Activated CD8-positive, alpha-beta T cell treated with anti-CD3 and anti-CD28 coated beads for 36 hours (primary cell): ENCODE measurements at regions of chr16 and their contacts with region 1.

Region 1: GRCh38 chr16:29848420-29849297 is 14.4 kb downstream of the CDIPT start:
- DNase-seq: peak; percentile 86
- ATAC-seq: peak; percentile 96
- H3K4me3 Mint-ChIP-seq: no peak overlapping the region
- H3K27ac Mint-ChIP-seq: no peak overlapping the region
- H3K4me1 Mint-ChIP-seq: no peaks in the 10 kb centered on the region
- H3K27me3 Mint-ChIP-seq: no peaks in the 10 kb centered on the region
- CTCF ChIP-seq: peak; percentile 93

Region 2: DNA sequence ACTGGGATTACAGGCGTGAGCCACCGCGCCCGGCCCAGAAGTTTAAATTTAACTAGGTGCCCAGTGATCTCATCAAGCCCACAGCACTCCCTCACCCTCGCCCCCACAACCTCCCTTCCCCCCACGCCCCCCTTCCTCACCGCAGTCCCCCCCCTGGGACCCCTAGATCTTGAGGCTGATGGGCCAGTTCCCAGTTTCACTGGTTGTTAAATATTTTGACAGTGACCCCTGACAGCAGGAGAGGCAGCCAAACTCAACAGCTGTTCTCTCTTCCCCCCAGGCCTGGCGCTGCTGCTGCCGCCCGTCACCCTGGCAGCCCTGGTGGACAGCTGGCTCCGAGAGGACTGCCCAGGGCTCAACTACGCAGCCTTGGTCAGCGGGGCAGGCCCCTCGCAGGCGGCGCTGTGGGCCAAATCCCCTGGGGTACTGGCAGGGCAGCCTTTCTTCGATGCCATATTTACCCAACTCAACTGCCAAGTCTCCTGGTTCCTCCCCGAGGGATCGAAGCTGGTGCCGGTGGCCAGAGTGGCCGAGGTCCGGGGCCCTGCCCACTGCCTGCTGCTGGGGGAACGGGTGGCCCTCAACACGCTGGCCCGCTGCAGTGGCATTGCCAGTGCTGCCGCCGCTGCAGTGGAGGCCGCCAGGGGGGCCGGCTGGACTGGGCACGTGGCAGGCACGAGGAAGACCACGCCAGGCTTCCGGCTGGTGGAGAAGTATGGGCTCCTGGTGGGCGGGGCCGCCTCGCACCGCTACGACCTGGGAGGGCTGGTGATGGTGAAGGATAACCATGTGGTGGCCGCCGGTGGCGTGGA is 154.1 kb before region 1 on chr16:
- CTCF ChIA-PET with region 1: interaction called, 51 read pairs
- POLR2A ChIA-PET with region 1: interaction called, 3 read pairs
- intact Hi-C with region 1: no loop called
- DNase-seq: no peak
- ATAC-seq: no peak
- H3K4me3 Mint-ChIP-seq: no peak overlapping the region
- H3K27ac Mint-ChIP-seq: no peak overlapping the region
- H3K4me1 Mint-ChIP-seq: peaks cover 2% of the 10 kb centered on the region
- H3K27me3 Mint-ChIP-seq: no peaks in the 10 kb centered on the region
- CTCF ChIP-seq: no peak

Region 3: DNA sequence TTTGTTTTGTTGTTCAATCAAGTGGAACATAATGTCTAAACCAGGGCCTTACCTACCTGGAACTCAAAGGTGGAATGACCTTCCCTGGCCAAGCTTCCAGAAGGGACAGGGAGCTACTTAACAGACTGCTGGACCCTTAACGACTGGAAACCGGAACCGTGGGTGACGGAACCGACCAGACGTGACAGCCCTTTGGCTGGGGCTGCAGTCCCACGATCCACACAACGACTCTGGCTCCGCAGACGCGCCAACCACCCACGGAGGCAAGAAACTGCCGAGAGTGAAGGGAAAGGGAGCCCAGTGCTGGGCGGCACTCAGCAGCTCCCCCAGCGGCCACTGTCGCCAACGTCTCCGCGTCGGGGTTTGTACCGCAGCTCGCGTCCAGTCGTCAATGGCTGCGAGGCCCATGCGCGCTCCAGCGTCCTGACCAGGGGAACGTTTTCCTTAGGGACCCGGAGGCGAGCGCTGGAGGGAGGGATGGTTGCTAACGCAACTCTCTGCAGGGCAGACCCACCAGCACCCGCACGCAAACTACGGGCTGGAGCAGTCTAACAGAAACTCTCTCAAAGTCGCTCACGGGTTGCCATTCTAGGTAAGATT is 63.7 kb before region 1 on chr16:
- CTCF ChIA-PET with region 1: interaction called, 12 read pairs
- POLR2A ChIA-PET with region 1: interaction called, 3 read pairs
- intact Hi-C with region 1: no loop called
- DNase-seq: peak; percentile 84
- ATAC-seq: peak; percentile 91
- H3K4me3 Mint-ChIP-seq: peak overlapping the region; percentile 58
- H3K27ac Mint-ChIP-seq: peak overlapping the region; percentile 66
- H3K4me1 Mint-ChIP-seq: peaks cover 32% of the 10 kb centered on the region
- H3K27me3 Mint-ChIP-seq: no peaks in the 10 kb centered on the region
- CTCF ChIP-seq: peak; percentile 91

Region 4: DNA sequence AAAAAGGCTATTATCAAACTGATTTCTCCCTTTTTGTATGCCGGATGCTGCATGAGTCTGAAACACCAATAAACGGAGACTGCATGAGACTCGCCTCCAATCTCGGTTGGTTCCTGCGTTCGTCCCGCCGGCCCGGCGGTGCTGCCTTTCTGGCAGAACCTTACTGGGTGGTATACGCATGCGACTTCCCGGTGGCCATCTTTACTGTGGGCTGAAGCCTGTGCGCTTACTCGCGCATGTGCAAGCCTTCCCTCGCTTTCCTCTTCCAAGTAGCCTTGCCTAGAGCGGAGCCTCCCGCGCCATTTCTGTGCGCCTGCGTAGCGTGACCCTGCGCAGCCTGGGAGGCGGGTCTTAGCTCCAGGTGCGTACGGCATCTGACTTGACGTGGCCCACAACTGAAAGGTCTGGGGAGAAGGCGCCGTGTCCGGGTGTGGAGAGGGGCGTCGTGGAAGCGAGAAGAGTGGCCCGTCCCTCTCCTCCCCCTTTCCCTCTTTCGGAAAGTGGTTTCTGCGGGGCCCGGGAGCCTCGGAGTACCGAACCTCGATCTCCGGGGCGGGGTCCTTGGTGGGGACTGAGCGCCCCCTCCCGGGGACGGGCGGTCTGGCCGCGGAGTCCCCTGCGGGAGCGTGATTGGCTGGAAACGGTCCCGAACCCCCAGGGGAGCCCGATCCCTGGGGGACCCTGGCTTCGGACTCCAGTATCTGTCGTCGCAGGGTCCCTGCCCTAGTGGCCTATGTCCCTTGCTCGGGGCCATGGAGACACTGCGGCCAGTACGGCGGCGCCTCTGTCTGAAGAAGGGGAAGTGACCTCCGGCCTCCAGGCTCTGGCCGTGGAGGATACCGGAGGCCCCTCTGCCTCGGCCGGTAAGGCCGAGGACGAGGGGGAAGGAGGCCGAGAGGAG is 32.6 kb before region 1 on chr16 and contains the start of gene PAGR1:
- CTCF ChIA-PET with region 1: interaction called, 95 read pairs
- POLR2A ChIA-PET with region 1: interaction called, 7 read pairs
- intact Hi-C with region 1: no loop called
- DNase-seq: peak; percentile 99
- ATAC-seq: peak; percentile 74
- H3K4me3 Mint-ChIP-seq: peak within 1 kb of the TSS; percentile 98
- H3K27ac Mint-ChIP-seq: peak within 1 kb of the TSS; percentile 95
- H3K4me1 Mint-ChIP-seq: peaks cover 69% of the 10 kb centered on the region
- H3K27me3 Mint-ChIP-seq: no peaks in the 10 kb centered on the region
- CTCF ChIP-seq: peak; percentile 94
- total RNA-seq, gene PAGR1: 26.8 to 29.0 TPM

Region 5: GRCh38 chr16:29836623-29837022 is 12.0 kb before region 1 on chr16:
- CTCF ChIA-PET with region 1: interaction called, 18 read pairs
- POLR2A ChIA-PET with region 1: no interaction called
- intact Hi-C with region 1: no loop called
- DNase-seq: no peak
- ATAC-seq: no peak
- H3K4me3 Mint-ChIP-seq: no peak overlapping the region
- H3K27ac Mint-ChIP-seq: no peak overlapping the region
- H3K4me1 Mint-ChIP-seq: peaks cover 14% of the 10 kb centered on the region
- H3K27me3 Mint-ChIP-seq: no peaks in the 10 kb centered on the region
- CTCF ChIP-seq: no peak

Region 6: DNA sequence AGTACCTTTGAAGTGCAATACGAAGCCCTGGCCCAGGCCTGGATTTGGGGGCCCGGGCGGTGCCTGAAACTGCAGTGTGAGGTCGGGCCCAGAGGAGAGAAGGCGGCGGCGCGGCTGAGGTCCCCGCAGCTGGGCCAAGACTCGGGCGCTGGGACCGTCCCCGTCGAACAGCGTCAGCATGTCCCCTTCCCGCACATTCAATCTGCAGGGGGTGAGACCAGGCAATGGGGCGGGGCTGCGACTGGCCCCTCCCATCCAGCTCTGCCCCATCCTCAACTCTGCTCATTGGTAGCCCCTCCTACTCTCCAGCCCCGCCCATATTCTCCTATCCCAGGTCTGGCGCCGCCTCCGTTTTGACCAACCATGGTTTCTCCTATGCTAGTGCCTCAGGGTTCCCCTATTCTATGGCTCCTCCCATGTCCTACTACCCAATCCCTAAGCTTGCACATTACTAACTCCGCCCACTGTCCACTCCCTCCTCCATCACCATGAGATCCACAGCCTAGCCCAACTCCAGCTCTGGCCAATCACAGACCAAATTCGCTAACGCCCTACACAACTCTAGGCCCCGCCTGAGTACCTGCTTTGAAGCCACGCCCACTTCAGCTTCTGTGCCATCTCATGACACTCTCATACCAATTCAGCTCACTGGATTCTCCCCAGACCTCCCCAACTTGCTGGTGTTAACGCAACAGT is 28.8 kb after region 1 on chr16:
- CTCF ChIA-PET with region 1: interaction called, 14 read pairs
- POLR2A ChIA-PET with region 1: no interaction called
- intact Hi-C with region 1: no loop called
- DNase-seq: peak; percentile 81
- ATAC-seq: peak; percentile 89
- H3K4me3 Mint-ChIP-seq: peak overlapping the region; percentile 61
- H3K27ac Mint-ChIP-seq: no peak overlapping the region
- H3K4me1 Mint-ChIP-seq: peaks cover 16% of the 10 kb centered on the region
- H3K27me3 Mint-ChIP-seq: peaks cover 30% of the 10 kb centered on the region
- CTCF ChIP-seq: no peak

Region 7: GRCh38 chr16:29891525-29892457 is 43.1 kb after region 1 on chr16:
- CTCF ChIA-PET with region 1: no interaction called
- POLR2A ChIA-PET with region 1: no interaction called
- intact Hi-C with region 1: no loop called
- DNase-seq: no peak
- ATAC-seq: no peak
- H3K4me3 Mint-ChIP-seq: no peak overlapping the region
- H3K27ac Mint-ChIP-seq: no peak overlapping the region
- H3K4me1 Mint-ChIP-seq: no peaks in the 10 kb centered on the region
- H3K27me3 Mint-ChIP-seq: peaks cover 7% of the 10 kb centered on the region
- CTCF ChIP-seq: no peak